ENCODE measurements at regions of chr4 and their contacts with region 1.

Region 1: GRCh38 chr4:27736367-27736766 is 875.7 kb downstream of the STIM2 start:
- DNase-seq: no peak
- H3K4me3 ChIP-seq: no peak overlapping the region
- H3K4me3 Mint-ChIP-seq: no peak overlapping the region
- H3K27ac ChIP-seq: no peak overlapping the region
- H3K27ac Mint-ChIP-seq: no peak overlapping the region
- H3K4me1 ChIP-seq: no peaks in the 10 kb centered on the region
- H3K4me1 Mint-ChIP-seq: no peaks in the 10 kb centered on the region
- H3K27me3 ChIP-seq: no peaks in the 10 kb centered on the region
- H3K27me3 Mint-ChIP-seq: no peaks in the 10 kb centered on the region
- CTCF ChIP-seq: no peak

Region 2: GRCh38 chr4:27474691-27475090 is 261.7 kb before region 1 on chr4:
- intact Hi-C with region 1: no loop called
- DNase-seq: no peak
- H3K4me3 ChIP-seq: no peak overlapping the region
- H3K4me3 Mint-ChIP-seq: no peak overlapping the region
- H3K27ac ChIP-seq: no peak overlapping the region
- H3K27ac Mint-ChIP-seq: no peak overlapping the region
- H3K4me1 ChIP-seq: no peaks in the 10 kb centered on the region
- H3K4me1 Mint-ChIP-seq: no peaks in the 10 kb centered on the region
- H3K27me3 ChIP-seq: no peaks in the 10 kb centered on the region
- H3K27me3 Mint-ChIP-seq: no peaks in the 10 kb centered on the region
- CTCF ChIP-seq: no peak

Region 3: GRCh38 chr4:27720010-27720766 is 16.2 kb before region 1 on chr4:
- intact Hi-C with region 1: no loop called
- DNase-seq: no peak
- H3K4me3 ChIP-seq: no peak overlapping the region
- H3K4me3 Mint-ChIP-seq: no peak overlapping the region
- H3K27ac ChIP-seq: no peak overlapping the region
- H3K27ac Mint-ChIP-seq: no peak overlapping the region
- H3K4me1 ChIP-seq: peaks cover 0 to 2% of the 10 kb centered on the region in 2 donors
- H3K4me1 Mint-ChIP-seq: peaks cover 5% of the 10 kb centered on the region
- H3K27me3 ChIP-seq: no peaks in the 10 kb centered on the region
- H3K27me3 Mint-ChIP-seq: no peaks in the 10 kb centered on the region
- CTCF ChIP-seq: no peak

Region 4: DNA sequence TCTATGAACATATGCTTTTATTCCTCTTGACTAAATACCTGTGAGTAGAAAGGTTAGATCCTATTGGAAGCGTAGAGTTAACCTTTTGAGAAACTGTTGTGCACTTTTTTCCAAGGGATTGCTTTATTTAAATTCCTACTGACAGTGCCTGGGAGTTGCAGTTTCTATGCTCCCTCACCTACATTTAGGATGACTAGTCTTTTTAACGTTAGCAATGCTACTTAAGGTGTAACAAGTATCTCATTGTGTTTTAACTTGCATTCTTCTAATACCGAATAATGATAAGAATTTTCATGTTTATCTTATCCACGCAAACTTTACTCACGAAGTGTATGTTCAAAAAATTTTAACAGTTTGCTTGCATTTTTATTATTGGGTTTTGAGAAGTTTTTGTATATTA is 1859.9 kb after region 1 on chr4:
- intact Hi-C with region 1: loop called in 1 of 2 experiments (anchors 10 kb)
- DNase-seq: no peak
- H3K4me3 ChIP-seq: no peak overlapping the region
- H3K4me3 Mint-ChIP-seq: no peak overlapping the region
- H3K27ac ChIP-seq: no peak overlapping the region
- H3K27ac Mint-ChIP-seq: no peak overlapping the region
- H3K4me1 ChIP-seq: no peaks in the 10 kb centered on the region
- H3K4me1 Mint-ChIP-seq: no peaks in the 10 kb centered on the region
- H3K27me3 ChIP-seq: no peaks in the 10 kb centered on the region
- H3K27me3 Mint-ChIP-seq: peaks cover 0 to 1% (median 0%) of the 10 kb centered on the region in 3 donors
- CTCF ChIP-seq: no peak

Measured in CD14-positive monocyte (primary cell).